ENCODE measurements at regions of chr5 and their contacts with region 1.

Region 1: DNA sequence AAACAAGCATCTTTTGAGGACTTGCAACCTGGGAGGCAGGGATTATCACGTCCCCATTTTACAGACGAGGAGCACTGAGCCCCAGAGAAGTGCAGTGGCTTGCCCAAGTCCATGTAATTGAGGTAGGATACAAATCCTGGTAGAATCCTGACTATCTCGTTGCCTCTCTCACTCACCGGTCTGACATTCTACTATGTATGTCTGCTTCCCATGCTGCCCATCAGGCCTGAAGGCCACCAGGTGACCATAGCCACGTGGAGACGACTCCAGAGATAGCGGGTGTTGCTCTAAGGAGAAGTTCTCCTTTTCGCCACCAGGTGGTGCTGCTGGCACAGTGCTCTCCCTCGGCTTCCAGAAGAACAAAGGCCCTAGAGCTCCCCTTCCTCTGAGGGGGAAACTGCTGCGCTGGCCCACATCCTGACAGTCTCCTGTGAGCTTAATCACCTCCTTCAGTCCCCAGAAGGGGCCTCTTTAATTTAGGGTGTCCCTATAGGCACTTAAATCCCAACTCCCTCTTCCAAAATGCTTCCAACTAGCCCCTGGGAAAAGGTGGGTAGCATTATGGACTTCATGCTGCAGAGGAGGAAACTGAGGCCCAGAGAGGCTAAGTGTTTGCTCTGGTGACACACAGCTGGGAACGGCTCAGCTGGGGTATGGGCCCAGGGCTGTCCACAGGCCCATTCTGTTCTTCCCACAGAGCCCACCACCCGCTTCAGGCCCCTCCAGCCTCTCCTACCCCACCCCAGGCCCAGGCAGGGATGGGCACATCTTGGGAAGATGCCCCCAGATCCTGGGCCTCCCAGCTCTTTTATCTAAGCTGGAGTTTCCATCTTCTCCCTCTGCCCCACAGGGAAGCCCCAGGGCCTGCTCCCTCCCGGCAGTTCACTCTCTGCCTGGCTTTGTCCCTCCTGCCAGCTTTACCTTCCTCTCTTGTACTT is 6.4 kb downstream of the SLC34A1 start:
- DNase-seq: peak; percentile 80 to 94 (median 84)
- ATAC-seq: peak; percentile 76
- H3K4me3 ChIP-seq: no peak overlapping the region
- H3K4me3 Mint-ChIP-seq: peak overlapping the region; percentile 52
- H3K27ac ChIP-seq: peak overlapping the region; percentile 29 to 72
- H3K27ac Mint-ChIP-seq: peak overlapping the region; percentile 80
- H3K4me1 ChIP-seq: peaks cover 59% of the 10 kb centered on the region
- H3K4me1 Mint-ChIP-seq: peaks cover 35% of the 10 kb centered on the region
- H3K27me3 ChIP-seq: no peaks in the 10 kb centered on the region
- H3K27me3 Mint-ChIP-seq: no peaks in the 10 kb centered on the region
- CTCF ChIP-seq: peak; percentile 95

Region 2: GRCh38 chr5:177362610-177363507 is 27.8 kb before region 1 on chr5:
- CTCF ChIA-PET with region 1: interaction called, 8 read pairs
- POLR2A ChIA-PET with region 1: interaction called, 12 read pairs
- intact Hi-C with region 1: no loop called
- DNase-seq: peak in 13 of 14 experiments; percentile 47 to 93 (median 63)
- ATAC-seq: peak; percentile 72
- H3K4me3 ChIP-seq: peak overlapping the region; percentile 61
- H3K4me3 Mint-ChIP-seq: peak overlapping the region; percentile 90
- H3K27ac ChIP-seq: peak overlapping the region; percentile 72 to 82
- H3K27ac Mint-ChIP-seq: peak overlapping the region; percentile 76
- H3K4me1 ChIP-seq: peaks cover 84% of the 10 kb centered on the region
- H3K4me1 Mint-ChIP-seq: peaks cover 63% of the 10 kb centered on the region
- H3K27me3 ChIP-seq: no peaks in the 10 kb centered on the region
- H3K27me3 Mint-ChIP-seq: no peaks in the 10 kb centered on the region
- CTCF ChIP-seq: no peak

Region 3: GRCh38 chr5:177425801-177426565 is 35.4 kb after region 1 on chr5:
- CTCF ChIA-PET with region 1: interaction called, 11 read pairs
- POLR2A ChIA-PET with region 1: interaction called, 35 read pairs
- intact Hi-C with region 1: loop called in 1 of 2 experiments (anchors 1 kb)
- DNase-seq: peak; percentile 98 to 100 (median 100)
- ATAC-seq: peak; percentile 79
- H3K4me3 ChIP-seq: peak overlapping the region; percentile 52
- H3K4me3 Mint-ChIP-seq: peak overlapping the region; percentile 97
- H3K27ac ChIP-seq: peak overlapping the region; percentile 77 to 83
- H3K27ac Mint-ChIP-seq: peak overlapping the region; percentile 96
- H3K4me1 ChIP-seq: peaks cover 63% of the 10 kb centered on the region
- H3K4me1 Mint-ChIP-seq: peaks cover 42% of the 10 kb centered on the region
- H3K27me3 ChIP-seq: no peaks in the 10 kb centered on the region
- H3K27me3 Mint-ChIP-seq: no peaks in the 10 kb centered on the region
- CTCF ChIP-seq: no peak

Region 4: GRCh38 chr5:177446200-177447065 is 55.8 kb after region 1 on chr5 and contains the start of gene PRR7:
- CTCF ChIA-PET with region 1: interaction called, 115 read pairs
- POLR2A ChIA-PET with region 1: interaction called, 59 read pairs
- intact Hi-C with region 1: no loop called
- DNase-seq: peak; percentile 56 to 93 (median 72)
- ATAC-seq: peak; percentile 43
- H3K4me3 ChIP-seq: peak within 1 kb of the TSS; percentile 56
- H3K4me3 Mint-ChIP-seq: peak within 1 kb of the TSS; percentile 80
- H3K27ac ChIP-seq: peak within 1 kb of the TSS; percentile 73 to 89
- H3K27ac Mint-ChIP-seq: peak within 1 kb of the TSS; percentile 88
- H3K4me1 ChIP-seq: peaks cover 73% of the 10 kb centered on the region
- H3K4me1 Mint-ChIP-seq: peaks cover 56% of the 10 kb centered on the region
- H3K27me3 ChIP-seq: no peaks in the 10 kb centered on the region
- H3K27me3 Mint-ChIP-seq: no peaks in the 10 kb centered on the region
- CTCF ChIP-seq: no peak
- total RNA-seq, gene PRR7: 23.3 to 23.5 TPM

Region 5: DNA sequence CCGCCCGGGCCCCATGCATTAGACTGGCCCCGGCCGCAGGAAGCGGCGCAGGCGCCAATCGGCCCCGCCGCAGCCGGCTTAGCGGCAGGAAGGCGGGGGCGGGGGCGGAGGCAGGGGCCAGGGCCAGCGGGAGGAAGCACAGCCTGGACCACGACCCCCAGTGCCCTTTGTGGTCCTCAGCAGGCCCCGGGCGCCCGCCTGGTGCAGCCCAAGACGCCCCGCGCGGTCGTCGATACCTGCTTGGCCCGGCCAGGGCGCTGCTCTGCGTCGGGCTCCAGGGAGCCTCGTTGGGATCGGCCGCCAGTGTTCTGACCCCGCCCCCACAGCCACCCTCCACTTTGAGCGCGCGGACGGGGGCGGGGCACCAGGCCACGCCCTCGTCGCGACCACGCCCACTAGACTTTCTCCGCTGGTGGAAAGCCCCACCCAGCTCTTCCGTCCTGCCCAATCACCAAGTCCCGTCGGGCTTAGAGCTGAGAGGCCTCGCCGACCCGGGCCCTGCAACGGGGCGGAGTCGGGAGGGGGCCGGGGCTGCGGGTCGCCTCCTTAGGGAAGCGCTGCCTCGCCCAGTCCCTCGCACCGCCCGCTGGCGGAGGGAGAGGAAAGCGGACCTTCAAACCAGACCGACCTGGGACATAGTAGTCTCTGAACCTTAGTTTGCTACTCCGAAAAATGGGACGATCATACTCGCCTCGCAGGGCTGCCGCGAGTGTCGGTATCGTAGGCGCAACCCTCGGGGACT is 106.8 kb after region 1 on chr5 and contains the start of gene PDLIM7:
- CTCF ChIA-PET with region 1: interaction called, 41 read pairs
- POLR2A ChIA-PET with region 1: interaction called, 11 read pairs
- intact Hi-C with region 1: loop called (anchors 1 kb)
- DNase-seq: peak; percentile 87 to 98 (median 94)
- ATAC-seq: peak; percentile 89
- H3K4me3 ChIP-seq: peak within 1 kb of the TSS; percentile 70
- H3K4me3 Mint-ChIP-seq: peak within 1 kb of the TSS; percentile 74
- H3K27ac ChIP-seq: no peak within 1 kb of the TSS
- H3K27ac Mint-ChIP-seq: no peak within 1 kb of the TSS
- H3K4me1 ChIP-seq: peaks cover 50% of the 10 kb centered on the region
- H3K4me1 Mint-ChIP-seq: peaks cover 31% of the 10 kb centered on the region
- H3K27me3 ChIP-seq: no peaks in the 10 kb centered on the region
- H3K27me3 Mint-ChIP-seq: no peaks in the 10 kb centered on the region
- CTCF ChIP-seq: no peak
- total RNA-seq, gene PDLIM7: 5.2 to 6.0 TPM

Measured in CD4-positive, alpha-beta T cell (primary cell).